ENCODE measurements at regions of chr2 and their contacts with region 1.

Region 1: GRCh38 chr2:203871371-203871983 is 3.9 kb downstream of the CTLA4 start:
- DNase-seq: no peak
- H3K4me3 ChIP-seq: no peak overlapping the region
- H3K27ac ChIP-seq: no peak overlapping the region
- H3K4me1 ChIP-seq: no peaks in the 10 kb centered on the region
- H3K27me3 ChIP-seq: no peaks in the 10 kb centered on the region
- CTCF ChIP-seq: no peak

Region 2: DNA sequence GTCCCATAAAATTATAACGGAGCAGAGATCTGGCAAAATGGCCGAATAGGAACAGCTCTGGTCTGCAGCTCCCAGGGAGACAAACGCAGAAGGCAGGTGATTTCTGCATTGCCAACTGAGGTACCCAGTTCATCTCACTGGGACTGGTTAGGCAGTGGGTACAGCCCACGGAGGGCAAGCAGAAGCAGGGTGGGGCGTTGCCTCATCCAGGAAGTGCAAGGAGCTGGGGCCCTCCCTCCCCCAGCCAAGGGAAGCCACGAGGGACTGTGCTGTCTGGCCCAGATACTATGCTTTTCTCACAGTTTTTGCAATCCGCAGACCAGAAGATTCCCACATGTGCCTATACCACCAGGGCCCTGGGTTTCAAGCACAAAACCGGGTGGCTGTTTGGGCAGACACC is 1022.7 kb before region 1 on chr2:
- intact Hi-C with region 1: loop called (anchors 10 kb)
- DNase-seq: no peak
- H3K4me3 ChIP-seq: no peak overlapping the region
- H3K27ac ChIP-seq: no peak overlapping the region
- H3K4me1 ChIP-seq: no peaks in the 10 kb centered on the region
- H3K27me3 ChIP-seq: no peaks in the 10 kb centered on the region
- CTCF ChIP-seq: no peak

Region 3: GRCh38 chr2:203559641-203560040 is 311.8 kb before region 1 on chr2:
- intact Hi-C with region 1: no loop called
- DNase-seq: no peak
- H3K4me3 ChIP-seq: no peak overlapping the region
- H3K27ac ChIP-seq: no peak overlapping the region
- H3K4me1 ChIP-seq: no peaks in the 10 kb centered on the region
- H3K27me3 ChIP-seq: no peaks in the 10 kb centered on the region
- CTCF ChIP-seq: no peak

Measured in colonic mucosa (tissue), 4 donors.